Mammary epithelial cell (primary cell): ENCODE measurements at regions of chr1 and their contacts with region 1.

Region 1: GRCh38 chr1:183915625-183916510 is 110.9 kb downstream of the RGL1 start:
- DNase-seq: peak; percentile 96
- H3K4me3 ChIP-seq: no peak overlapping the region
- H3K27ac ChIP-seq: peak overlapping the region; percentile 39
- H3K4me1 ChIP-seq: peaks cover 12% of the 10 kb centered on the region
- H3K27me3 ChIP-seq: no peaks in the 10 kb centered on the region
- CTCF ChIP-seq: peak; percentile 72 to 82

Region 2: DNA sequence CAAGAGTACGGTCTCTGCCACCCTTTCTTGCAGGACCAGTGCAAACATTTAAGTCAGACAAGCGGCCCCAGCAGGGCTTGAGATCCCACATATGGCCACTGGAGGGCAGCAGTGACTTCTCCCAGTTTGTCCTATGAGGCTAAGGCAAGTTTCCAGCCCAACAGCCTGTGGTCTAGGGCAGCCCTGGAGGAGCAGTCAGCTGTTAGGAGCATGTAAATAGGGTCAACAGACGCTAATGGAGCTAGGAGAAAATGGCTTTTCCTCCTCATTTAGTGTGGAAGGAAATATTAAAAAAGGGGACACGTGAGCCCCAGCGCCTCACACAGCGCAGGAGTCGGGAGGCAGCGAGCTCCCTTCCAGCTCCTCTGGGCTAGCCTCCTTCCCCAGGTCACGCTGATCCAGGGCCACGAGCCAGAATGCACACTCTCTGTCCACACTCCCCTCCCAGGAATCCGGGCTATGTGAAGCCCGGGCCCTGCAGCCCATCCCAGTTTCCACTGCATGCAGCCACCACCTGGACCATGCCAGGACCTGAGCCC is 634.2 kb before region 1 on chr1:
- CTCF ChIA-PET with region 1: interaction called, 4 read pairs
- dilution Hi-C with region 1: no loop called
- in situ Hi-C with region 1: no loop called
- intact Hi-C with region 1: loop called (anchors 1 kb)
- DNase-seq: peak; percentile 85
- H3K4me3 ChIP-seq: no peak overlapping the region
- H3K27ac ChIP-seq: peak overlapping the region; percentile 58
- H3K4me1 ChIP-seq: peaks cover 67% of the 10 kb centered on the region
- H3K27me3 ChIP-seq: no peaks in the 10 kb centered on the region
- CTCF ChIP-seq: peak; percentile 77 to 95

Region 3: DNA sequence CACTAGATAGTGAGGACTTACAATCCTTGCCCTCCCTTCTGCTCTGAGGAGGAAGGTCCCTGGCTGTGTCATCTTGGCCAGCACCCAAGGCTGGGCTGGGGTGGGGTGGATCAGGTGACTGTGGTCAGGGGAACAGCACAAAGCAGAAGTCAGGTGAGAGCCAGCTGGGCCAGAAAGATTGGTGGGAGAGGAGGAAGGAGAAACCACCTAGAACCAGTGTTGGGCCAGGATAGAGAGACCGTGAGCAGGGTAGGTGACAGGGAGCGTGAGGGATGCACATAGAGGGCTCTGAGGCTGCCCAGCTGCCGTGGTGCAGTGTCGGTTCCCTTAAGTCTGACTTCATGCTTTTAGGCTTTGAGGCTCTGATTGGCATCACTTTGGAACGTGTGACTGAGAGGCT is 348.3 kb before region 1 on chr1:
- CTCF ChIA-PET with region 1: no interaction called
- dilution Hi-C with region 1: no loop called
- in situ Hi-C with region 1: no loop called
- intact Hi-C with region 1: loop called (anchors 10 kb)
- DNase-seq: peak; percentile 80
- H3K4me3 ChIP-seq: no peak overlapping the region
- H3K27ac ChIP-seq: no peak overlapping the region
- H3K4me1 ChIP-seq: peaks cover 7% of the 10 kb centered on the region
- H3K27me3 ChIP-seq: no peaks in the 10 kb centered on the region
- CTCF ChIP-seq: no peak

Region 4: DNA sequence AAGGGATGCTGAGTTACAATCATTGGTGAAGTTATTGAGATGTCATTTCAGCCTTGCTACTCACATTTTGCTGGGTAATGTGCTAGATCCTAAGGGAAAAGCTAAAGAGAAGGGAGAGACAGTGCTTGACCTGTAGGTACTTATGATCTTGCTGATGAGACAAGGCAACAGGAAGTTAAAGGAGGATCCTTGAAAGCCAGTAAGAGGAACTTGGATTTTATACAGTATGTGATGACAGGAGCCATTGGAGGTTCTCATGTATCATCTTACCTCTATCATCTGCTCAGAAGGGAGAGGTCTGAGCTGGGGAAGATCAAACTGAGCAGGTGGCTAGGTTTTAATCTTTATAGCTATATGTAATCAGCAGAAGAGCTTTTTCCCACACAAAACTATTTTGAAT is 269.1 kb before region 1 on chr1:
- CTCF ChIA-PET with region 1: no interaction called
- dilution Hi-C with region 1: no loop called
- in situ Hi-C with region 1: loop called (anchors 10 kb)
- intact Hi-C with region 1: no loop called
- DNase-seq: no peak
- H3K4me3 ChIP-seq: no peak overlapping the region
- H3K27ac ChIP-seq: no peak overlapping the region
- H3K4me1 ChIP-seq: no peaks in the 10 kb centered on the region
- H3K27me3 ChIP-seq: no peaks in the 10 kb centered on the region
- CTCF ChIP-seq: no peak

Region 5: GRCh38 chr1:183685112-183685713 is 230.7 kb before region 1 on chr1:
- CTCF ChIA-PET with region 1: no interaction called
- dilution Hi-C with region 1: no loop called
- in situ Hi-C with region 1: no loop called
- intact Hi-C with region 1: loop called (anchors 1 kb)
- DNase-seq: peak; percentile 32
- H3K4me3 ChIP-seq: no peak overlapping the region
- H3K27ac ChIP-seq: no peak overlapping the region
- H3K4me1 ChIP-seq: no peaks in the 10 kb centered on the region
- H3K27me3 ChIP-seq: no peaks in the 10 kb centered on the region
- CTCF ChIP-seq: peak; percentile 65 to 73

Region 6: GRCh38 chr1:183896466-183897048 is 19.3 kb before region 1 on chr1:
- CTCF ChIA-PET with region 1: no interaction called
- dilution Hi-C with region 1: no loop called
- in situ Hi-C with region 1: no loop called
- intact Hi-C with region 1: no loop called
- DNase-seq: peak; percentile 46
- H3K4me3 ChIP-seq: no peak overlapping the region
- H3K27ac ChIP-seq: no peak overlapping the region
- H3K4me1 ChIP-seq: no peaks in the 10 kb centered on the region
- H3K27me3 ChIP-seq: no peaks in the 10 kb centered on the region
- CTCF ChIP-seq: no peak

Region 7: GRCh38 chr1:184036517-184036949 is 120.7 kb after region 1 on chr1:
- CTCF ChIA-PET with region 1: no interaction called
- dilution Hi-C with region 1: no loop called
- in situ Hi-C with region 1: no loop called
- intact Hi-C with region 1: no loop called
- DNase-seq: no peak
- H3K4me3 ChIP-seq: peak overlapping the region in 2 of 3 experiments; percentile 48 to 57
- H3K27ac ChIP-seq: no peak overlapping the region
- H3K4me1 ChIP-seq: peaks cover 15% of the 10 kb centered on the region
- H3K27me3 ChIP-seq: peaks cover 31% of the 10 kb centered on the region
- CTCF ChIP-seq: no peak

Region 8: DNA sequence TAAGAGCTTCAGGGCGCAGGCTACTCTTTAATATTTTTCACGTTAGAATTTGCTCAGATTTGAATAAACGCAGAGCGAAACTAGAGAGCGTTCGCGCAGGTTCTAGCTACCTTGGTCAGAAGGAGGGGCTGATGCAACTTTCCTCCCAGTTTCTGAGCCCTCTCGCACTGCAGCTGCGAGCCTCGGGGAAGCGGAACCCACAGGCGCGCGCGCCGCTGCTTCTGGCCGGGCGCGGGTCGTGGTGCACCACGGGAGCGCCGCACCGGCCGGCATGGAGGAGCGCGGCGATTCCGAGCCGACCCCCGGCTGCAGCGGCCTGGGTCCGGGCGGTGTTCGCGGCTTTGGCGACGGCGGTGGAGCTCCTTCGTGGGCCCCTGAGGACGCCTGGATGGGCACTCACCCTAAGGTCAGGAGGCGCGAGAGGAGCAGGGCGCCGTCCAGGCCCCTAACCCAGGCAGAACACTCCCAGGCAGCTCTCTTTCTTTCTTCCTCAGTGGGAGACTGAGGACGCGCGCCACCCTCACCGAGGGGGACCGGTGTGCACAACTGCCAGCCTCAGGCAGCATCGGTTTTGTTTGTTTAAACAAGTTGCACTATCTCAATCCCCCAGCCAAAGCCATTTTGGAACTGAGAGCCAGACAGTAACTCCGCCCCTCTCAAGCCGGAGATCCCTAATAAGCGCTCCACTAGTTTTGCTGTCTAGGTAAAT is 135.8 kb after region 1 on chr1 and contains the start of gene TSEN15:
- CTCF ChIA-PET with region 1: no interaction called
- dilution Hi-C with region 1: no loop called
- in situ Hi-C with region 1: no loop called
- intact Hi-C with region 1: loop called (anchors 5 kb)
- DNase-seq: peak; percentile 85
- H3K4me3 ChIP-seq: peak within 1 kb of the TSS; percentile 86 to 100 (median 93)
- H3K27ac ChIP-seq: peak within 1 kb of the TSS; percentile 84
- H3K4me1 ChIP-seq: peaks cover 22% of the 10 kb centered on the region
- H3K27me3 ChIP-seq: peaks cover 2% of the 10 kb centered on the region
- CTCF ChIP-seq: no peak
- total RNA-seq, gene TSEN15: 40.8 to 66.5 TPM

Region 9: GRCh38 chr1:184691719-184692324 is 776.0 kb after region 1 on chr1:
- CTCF ChIA-PET with region 1: no interaction called
- dilution Hi-C with region 1: no loop called
- in situ Hi-C with region 1: no loop called
- intact Hi-C with region 1: loop called (anchors 5 kb)
- DNase-seq: peak; percentile 41
- H3K4me3 ChIP-seq: no peak overlapping the region
- H3K27ac ChIP-seq: no peak overlapping the region
- H3K4me1 ChIP-seq: no peaks in the 10 kb centered on the region
- H3K27me3 ChIP-seq: no peaks in the 10 kb centered on the region
- CTCF ChIP-seq: peak; percentile 80 to 86